ENCODE measurements at regions of chr6 and their contacts with region 1.

Region 1: DNA sequence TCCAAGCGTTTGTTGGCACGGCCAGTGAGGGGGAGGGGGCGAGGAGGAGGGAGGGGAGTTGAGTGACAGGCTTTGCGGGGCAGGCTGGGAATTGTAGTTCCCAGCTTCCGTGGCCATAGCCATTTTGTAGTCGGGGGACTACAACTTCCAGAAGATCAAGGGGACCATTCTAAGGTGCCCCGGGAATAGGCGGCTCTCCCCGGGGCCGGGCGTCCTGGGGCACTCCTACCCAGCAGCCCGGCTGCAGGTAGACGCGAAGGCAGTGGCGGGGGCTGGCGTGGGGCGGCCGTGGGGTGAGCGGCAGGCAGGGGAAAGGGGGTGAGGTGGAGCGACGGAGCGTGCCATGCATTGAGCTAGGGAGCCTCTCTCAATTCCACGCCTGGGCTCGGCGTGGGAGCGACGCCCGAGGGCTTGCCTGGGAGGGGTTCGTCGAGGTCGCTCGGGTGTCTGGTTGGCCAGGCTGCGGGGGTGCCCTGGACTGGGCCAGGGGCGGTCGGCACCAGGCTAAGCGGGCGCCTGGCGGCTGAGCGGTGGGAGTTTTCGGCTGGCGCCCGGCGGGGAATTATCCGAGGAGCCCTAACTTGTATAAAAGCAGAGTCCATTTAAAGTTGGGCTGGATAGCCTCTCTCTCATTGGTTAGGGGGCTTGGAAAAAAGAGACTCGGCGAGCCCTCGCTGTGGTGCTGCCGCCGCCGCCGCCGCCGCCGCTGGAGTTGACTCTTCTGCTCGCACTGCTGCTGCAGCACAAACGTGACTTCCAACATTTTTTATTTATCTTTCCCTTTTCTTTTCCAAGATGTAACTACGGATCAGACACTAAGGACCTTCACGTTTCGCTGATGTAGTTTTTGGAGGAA is at the start of gene JARID2:
- DNase-seq: peak; percentile 98
- H3K4me3 Mint-ChIP-seq: peak within 1 kb of the TSS; percentile 99
- H3K27ac Mint-ChIP-seq: peak within 1 kb of the TSS; percentile 95
- H3K4me1 Mint-ChIP-seq: peaks cover 28% of the 10 kb centered on the region
- H3K27me3 Mint-ChIP-seq: peaks cover 2% of the 10 kb centered on the region
- total RNA-seq, gene JARID2: 48.7 and 49.5 TPM in 2 replicates

Region 2: GRCh38 chr6:14210663-14211561 is 1034.7 kb before region 1 on chr6:
- intact Hi-C with region 1: loop called (anchors 1 kb)
- DNase-seq: peak; percentile 98
- H3K4me3 Mint-ChIP-seq: peak overlapping the region; percentile 85
- H3K27ac Mint-ChIP-seq: peak overlapping the region; percentile 85
- H3K4me1 Mint-ChIP-seq: peaks cover 21% of the 10 kb centered on the region
- H3K27me3 Mint-ChIP-seq: no peaks in the 10 kb centered on the region

Region 3: DNA sequence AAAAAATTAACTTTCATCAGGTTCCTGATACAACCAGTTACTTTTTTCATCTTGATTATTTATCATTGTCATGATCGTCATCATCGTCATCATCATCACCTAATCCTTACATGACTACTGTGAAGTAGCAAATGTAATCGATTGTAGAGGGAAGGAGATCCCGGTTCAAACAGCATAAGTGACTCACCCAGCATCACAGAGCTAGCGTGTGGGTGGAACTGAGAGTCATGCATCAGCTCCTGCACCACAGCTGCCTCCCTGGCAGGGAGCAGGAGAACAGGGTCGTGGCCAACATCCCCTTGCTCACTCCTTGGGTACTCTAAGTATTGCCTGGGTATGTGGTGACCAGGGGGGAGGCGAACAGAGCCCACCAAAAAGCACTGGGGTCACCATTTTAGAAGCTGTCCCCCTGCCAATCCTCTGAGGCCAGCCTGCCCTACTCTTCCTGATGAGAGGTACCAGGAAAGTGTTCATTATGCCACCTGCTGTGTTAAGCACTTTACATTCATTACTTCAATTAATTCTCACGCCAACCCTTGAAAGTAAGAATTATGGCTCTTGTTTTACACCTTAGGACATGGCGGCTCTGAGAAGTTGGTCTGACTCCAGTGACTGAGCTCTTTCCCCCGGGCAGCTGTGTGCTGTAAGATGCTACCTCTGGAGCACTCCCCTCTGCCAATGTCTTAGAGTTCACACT is 702.8 kb before region 1 on chr6:
- intact Hi-C with region 1: loop called (anchors 5 kb)
- DNase-seq: peak; percentile 74
- H3K4me3 Mint-ChIP-seq: peak overlapping the region; percentile 17
- H3K27ac Mint-ChIP-seq: peak overlapping the region; percentile 59
- H3K4me1 Mint-ChIP-seq: peaks cover 25% of the 10 kb centered on the region
- H3K27me3 Mint-ChIP-seq: peaks cover 2% of the 10 kb centered on the region

Region 4: DNA sequence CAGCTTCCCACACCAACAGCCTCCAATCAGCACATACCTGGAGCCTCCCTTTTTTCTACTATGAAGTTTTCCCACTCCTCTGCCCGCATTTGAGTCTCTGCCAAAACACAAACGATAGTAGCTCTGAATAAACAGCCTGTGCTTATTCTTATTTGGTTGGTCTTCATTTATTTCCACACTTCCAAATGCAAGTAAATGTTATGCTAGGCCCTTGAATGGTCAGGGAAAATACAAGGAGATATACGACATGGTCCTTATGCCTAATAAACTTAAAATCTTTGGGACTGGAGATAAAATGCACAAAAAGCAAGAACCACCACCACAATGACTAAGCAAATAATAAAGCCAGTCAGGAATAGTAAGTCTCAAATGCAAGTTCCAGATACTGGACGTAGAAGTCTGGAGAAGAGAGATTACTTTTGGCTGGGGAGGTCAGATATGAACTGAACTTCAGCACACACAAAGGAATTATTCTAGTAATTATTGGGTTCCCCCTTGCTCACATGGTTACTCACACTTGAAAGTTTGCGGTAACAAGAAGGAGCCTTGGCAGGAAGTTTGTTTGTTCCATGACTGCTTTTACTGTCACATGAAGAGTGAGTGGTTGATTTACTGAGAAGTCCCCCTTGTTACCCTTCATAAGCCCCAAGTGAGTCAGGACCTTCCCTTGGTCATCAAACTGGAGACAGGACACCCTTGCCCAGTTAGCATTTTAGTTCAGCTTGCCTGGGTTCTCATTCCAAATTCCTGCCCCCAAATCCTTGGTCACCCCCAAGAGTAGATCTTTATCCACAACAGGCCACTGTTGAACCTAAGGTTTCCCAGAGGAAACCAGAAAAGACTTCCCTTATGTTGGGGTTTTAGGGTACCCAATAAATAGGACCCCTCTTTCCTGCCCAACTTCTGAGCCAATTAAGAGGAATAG is 510.9 kb before region 1 on chr6:
- intact Hi-C with region 1: loop called (anchors 1 kb)
- DNase-seq: peak; percentile 88
- H3K4me3 Mint-ChIP-seq: peak overlapping the region; percentile 54
- H3K27ac Mint-ChIP-seq: peak overlapping the region; percentile 95
- H3K4me1 Mint-ChIP-seq: peaks cover 91% of the 10 kb centered on the region
- H3K27me3 Mint-ChIP-seq: no peaks in the 10 kb centered on the region

Region 5: DNA sequence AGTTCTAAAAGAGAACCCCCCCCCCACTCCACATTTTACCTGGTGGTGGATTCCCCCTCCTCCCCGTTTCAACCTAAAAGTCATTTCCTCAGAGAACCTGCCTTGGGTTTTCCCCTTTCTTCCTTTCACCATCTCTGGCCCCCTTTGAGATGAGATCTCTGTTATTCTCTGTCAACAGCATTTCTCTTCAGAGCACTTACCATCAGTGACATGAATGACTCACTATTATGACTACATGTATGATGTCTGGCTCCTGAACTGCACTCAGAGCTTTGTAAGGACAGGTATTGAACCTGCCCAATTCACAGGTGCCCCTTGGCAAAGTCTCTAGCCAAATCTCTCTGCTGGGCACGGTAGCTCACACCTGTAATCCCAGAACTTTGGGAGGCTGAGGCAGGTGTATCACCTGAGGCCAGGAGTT is 61.1 kb before region 1 on chr6:
- intact Hi-C with region 1: loop called (anchors 2 kb)
- DNase-seq: peak; percentile 72
- H3K4me3 Mint-ChIP-seq: peak overlapping the region; percentile 10
- H3K27ac Mint-ChIP-seq: peak overlapping the region; percentile 92
- H3K4me1 Mint-ChIP-seq: peaks cover 16% of the 10 kb centered on the region
- H3K27me3 Mint-ChIP-seq: no peaks in the 10 kb centered on the region

Region 6: DNA sequence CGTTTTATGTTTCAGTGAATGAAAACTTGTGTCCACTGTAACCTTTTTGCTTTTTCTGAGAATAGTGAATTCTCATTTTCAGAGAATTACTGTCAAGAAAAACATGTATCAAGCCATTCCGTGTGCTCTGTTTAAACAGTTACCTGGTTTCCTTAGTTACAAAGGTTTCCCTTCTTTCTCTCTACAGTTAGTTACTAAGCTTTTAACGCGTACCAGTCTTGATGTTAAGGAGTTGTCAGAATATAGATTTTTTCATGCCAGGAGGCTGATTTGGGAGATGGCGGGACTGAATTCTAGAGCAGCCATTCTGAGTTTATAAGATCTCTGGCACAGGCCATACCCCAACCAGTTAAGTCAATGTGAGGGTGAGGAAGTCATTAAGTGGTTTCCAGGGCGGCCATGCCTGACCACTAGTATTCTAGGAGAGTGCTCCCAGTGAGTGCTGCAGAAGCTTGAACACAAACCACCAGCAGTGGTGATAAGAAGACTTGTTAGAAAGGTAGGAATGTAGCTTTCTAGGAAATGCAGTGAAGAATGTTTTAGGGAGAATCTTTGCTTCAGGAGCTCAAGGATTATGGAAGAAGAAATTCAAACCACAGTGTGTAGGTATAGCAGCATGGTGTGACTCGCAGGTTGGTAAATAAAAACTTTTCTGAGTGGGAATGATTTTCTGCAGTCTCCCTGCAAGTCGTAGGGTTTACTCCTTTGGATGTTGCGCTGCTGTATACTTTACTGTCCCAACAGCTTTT is 113.2 kb after region 1 on chr6:
- intact Hi-C with region 1: no loop called
- DNase-seq: no peak
- H3K4me3 Mint-ChIP-seq: no peak overlapping the region
- H3K27ac Mint-ChIP-seq: peak overlapping the region; percentile 9
- H3K4me1 Mint-ChIP-seq: peaks cover 29% of the 10 kb centered on the region
- H3K27me3 Mint-ChIP-seq: no peaks in the 10 kb centered on the region

Region 7: DNA sequence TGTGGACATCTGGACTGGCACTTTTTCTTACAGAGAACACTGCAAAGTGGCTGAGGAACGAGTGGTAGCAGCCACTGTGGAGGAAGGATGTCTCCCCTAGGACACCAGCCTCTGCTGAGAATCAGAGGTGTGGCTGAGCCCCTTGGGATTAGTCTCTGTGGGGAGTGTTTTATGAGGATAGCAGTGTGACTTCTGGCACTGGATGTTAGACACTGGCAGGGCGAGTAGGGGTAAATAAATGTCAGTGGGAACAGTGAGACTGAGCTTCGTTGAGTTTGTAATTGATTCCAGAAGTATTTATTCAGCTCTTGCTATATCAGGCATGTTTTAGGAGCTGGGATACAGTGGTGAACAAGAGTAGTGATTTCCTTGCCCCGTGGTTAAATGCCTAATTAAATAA is 124.2 kb after region 1 on chr6:
- intact Hi-C with region 1: no loop called
- DNase-seq: no peak
- H3K4me3 Mint-ChIP-seq: no peak overlapping the region
- H3K27ac Mint-ChIP-seq: peak overlapping the region; percentile 5
- H3K4me1 Mint-ChIP-seq: peaks cover 50% of the 10 kb centered on the region
- H3K27me3 Mint-ChIP-seq: no peaks in the 10 kb centered on the region

Region 8: DNA sequence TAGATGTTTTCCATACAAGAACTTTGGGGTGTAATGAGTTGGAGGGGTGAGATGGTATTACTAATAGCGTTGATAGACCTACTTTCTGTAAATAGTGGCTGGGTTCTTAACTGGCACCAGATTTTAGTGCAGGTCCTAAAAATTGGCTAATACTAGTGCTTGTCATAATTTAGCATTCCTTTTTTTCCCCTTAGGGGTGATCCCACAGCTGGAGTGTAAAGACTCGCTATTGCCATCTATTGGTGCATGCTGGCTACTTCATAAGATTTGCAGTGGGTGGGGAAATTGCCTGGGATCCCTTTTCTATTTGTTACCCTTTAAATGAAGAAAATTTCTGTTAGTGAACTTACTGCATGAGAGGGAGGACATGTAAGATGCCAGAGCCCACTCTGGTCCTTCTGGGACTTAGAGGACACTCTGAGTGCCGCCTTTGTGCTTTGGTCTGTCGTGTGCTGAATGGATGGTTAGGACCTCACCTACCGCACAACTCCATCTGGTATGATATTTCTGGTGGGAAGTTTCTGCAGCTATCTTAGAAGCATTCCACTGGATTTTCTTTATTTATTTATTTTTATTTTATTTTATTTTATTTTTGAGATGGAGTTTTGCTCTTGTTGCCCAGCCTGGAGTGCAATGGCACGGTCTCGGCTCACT is 195.8 kb after region 1 on chr6:
- intact Hi-C with region 1: loop called (anchors 2 kb)
- DNase-seq: peak; percentile 84
- H3K4me3 Mint-ChIP-seq: no peak overlapping the region
- H3K27ac Mint-ChIP-seq: no peak overlapping the region
- H3K4me1 Mint-ChIP-seq: peaks cover 70% of the 10 kb centered on the region
- H3K27me3 Mint-ChIP-seq: no peaks in the 10 kb centered on the region

Region 9: GRCh38 chr6:15547400-15547799 is 301.8 kb after region 1 on chr6:
- intact Hi-C with region 1: no loop called
- DNase-seq: no peak
- H3K4me3 Mint-ChIP-seq: no peak overlapping the region
- H3K27ac Mint-ChIP-seq: no peak overlapping the region
- H3K4me1 Mint-ChIP-seq: peaks cover 2% of the 10 kb centered on the region
- H3K27me3 Mint-ChIP-seq: no peaks in the 10 kb centered on the region

Region 10: GRCh38 chr6:16128759-16129622 is 883.4 kb after region 1 on chr6 and contains the start of gene MYLIP:
- intact Hi-C with region 1: loop called (anchors 2 kb)
- DNase-seq: peak; percentile 98
- H3K4me3 Mint-ChIP-seq: peak within 1 kb of the TSS; percentile 91
- H3K27ac Mint-ChIP-seq: peak within 1 kb of the TSS; percentile 93
- H3K4me1 Mint-ChIP-seq: peaks cover 32% of the 10 kb centered on the region
- H3K27me3 Mint-ChIP-seq: peaks cover 20% of the 10 kb centered on the region
- total RNA-seq, gene MYLIP: 18.3 and 18.5 TPM in 2 replicates